ENCODE measurements at regions of chr17 and their contacts with region 1.

Region 1: GRCh38 chr17:32877164-32877764 is 340 bp upstream of the MYO1D start:
- DNase-seq: peak; percentile 95 to 97
- ATAC-seq: peak; percentile 97
- H3K4me3 ChIP-seq: peak overlapping the region; percentile 74 to 97
- H3K27ac ChIP-seq: peak overlapping the region; percentile 71 to 96
- H3K4me1 ChIP-seq: peaks cover 0 to 2% of the 10 kb centered on the region in 2 donors
- H3K27me3 ChIP-seq: no peaks in the 10 kb centered on the region

Region 2: GRCh38 chr17:32723310-32723955 is 153.8 kb before region 1 on chr17:
- intact Hi-C with region 1: no loop called
- DNase-seq: no peak
- ATAC-seq: no peak
- H3K4me3 ChIP-seq: no peak overlapping the region
- H3K27ac ChIP-seq: no peak overlapping the region
- H3K4me1 ChIP-seq: no peaks in the 10 kb centered on the region
- H3K27me3 ChIP-seq: no peaks in the 10 kb centered on the region

Region 3: DNA sequence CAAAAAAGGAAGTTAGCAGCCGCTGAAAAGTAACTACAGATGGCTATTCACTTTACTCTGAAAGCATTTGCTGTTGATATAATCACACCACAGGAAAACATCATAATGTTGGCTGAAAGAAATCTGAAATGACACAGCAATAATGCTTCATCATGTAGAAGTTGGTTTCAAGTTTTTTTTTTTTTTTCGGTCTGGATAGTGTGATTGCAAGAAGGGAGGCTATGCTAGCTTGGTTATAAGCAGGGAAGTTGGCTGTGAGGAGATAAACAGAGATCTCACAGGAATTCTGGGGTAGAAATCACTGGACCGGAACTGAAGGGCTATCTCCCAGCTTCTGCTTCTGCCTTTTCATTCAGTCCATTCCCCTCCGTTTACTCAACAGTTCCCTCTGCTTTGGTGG is 58.2 kb before region 1 on chr17:
- intact Hi-C with region 1: loop called in 1 of 2 experiments (anchors 5 kb)
- DNase-seq: no peak
- ATAC-seq: peak; percentile 62
- H3K4me3 ChIP-seq: peak overlapping the region in 1 of 2 donors; percentile 26
- H3K27ac ChIP-seq: peak overlapping the region; percentile 36 to 80
- H3K4me1 ChIP-seq: peaks cover 4 to 5% of the 10 kb centered on the region in 2 donors
- H3K27me3 ChIP-seq: no peaks in the 10 kb centered on the region

Region 4: DNA sequence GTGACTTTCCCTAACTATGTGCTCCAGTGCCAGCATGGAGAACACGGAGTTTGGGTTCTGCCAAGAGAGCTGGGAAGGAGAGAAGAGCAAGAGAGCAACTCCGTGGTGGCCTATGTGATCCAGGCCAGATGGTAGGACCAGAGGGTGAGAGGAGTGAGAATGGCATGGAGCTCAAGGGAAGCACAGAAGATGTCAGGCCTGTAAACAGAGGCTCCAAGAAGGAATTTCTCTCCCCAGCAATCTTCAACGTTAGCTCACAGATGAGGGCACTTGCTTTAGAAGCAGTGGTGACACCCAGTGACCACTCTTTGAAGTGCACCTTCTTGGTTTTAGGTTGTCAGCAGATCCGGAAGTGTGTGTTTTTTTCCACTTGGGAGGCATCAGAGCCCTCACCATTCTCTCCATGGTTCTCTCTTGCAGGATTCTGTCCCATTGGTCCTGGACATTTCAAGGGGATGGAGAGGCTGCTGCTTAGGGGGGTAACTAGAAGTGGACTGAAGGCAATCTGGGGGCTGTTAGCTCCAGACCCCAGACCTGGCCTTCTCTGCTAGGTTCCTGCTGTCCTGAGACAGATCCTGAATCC is 32.6 kb after region 1 on chr17:
- intact Hi-C with region 1: loop called in 1 of 2 experiments (anchors 2 kb)
- DNase-seq: peak in 1 of 2 donors; percentile 76
- ATAC-seq: peak; percentile 85
- H3K4me3 ChIP-seq: no peak overlapping the region
- H3K27ac ChIP-seq: no peak overlapping the region
- H3K4me1 ChIP-seq: no peaks in the 10 kb centered on the region
- H3K27me3 ChIP-seq: no peaks in the 10 kb centered on the region

Region 5: DNA sequence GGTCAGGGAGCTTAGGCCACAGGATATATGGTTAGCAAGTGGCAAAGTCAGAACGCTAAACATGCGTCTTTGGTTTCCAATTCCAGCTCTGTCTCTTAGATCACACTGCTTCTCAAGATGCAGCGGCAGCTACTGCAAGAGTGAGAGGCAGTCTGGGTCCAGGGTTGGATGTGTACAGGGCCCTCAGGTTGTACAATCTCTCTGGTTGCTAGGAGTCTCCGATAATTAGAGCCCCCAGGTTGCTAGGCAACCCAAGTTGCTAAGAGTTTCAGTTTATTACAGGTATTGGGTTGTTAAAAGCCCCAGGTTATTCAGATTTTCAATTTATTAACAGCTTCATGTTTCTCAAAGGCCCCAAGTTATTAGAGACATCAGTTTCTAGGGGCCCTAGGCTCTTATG is 98.9 kb after region 1 on chr17:
- intact Hi-C with region 1: no loop called
- DNase-seq: no peak
- ATAC-seq: no peak
- H3K4me3 ChIP-seq: no peak overlapping the region
- H3K27ac ChIP-seq: no peak overlapping the region
- H3K4me1 ChIP-seq: no peaks in the 10 kb centered on the region
- H3K27me3 ChIP-seq: no peaks in the 10 kb centered on the region

Region 6: GRCh38 chr17:32997753-32998632 is 120.7 kb after region 1 on chr17:
- intact Hi-C with region 1: no loop called
- DNase-seq: peak; percentile 84 to 93
- ATAC-seq: peak; percentile 51
- H3K4me3 ChIP-seq: no peak overlapping the region
- H3K27ac ChIP-seq: no peak overlapping the region
- H3K4me1 ChIP-seq: no peaks in the 10 kb centered on the region
- H3K27me3 ChIP-seq: no peaks in the 10 kb centered on the region